ENCODE measurements at regions of chr1 and their contacts with region 1.

Region 1: DNA sequence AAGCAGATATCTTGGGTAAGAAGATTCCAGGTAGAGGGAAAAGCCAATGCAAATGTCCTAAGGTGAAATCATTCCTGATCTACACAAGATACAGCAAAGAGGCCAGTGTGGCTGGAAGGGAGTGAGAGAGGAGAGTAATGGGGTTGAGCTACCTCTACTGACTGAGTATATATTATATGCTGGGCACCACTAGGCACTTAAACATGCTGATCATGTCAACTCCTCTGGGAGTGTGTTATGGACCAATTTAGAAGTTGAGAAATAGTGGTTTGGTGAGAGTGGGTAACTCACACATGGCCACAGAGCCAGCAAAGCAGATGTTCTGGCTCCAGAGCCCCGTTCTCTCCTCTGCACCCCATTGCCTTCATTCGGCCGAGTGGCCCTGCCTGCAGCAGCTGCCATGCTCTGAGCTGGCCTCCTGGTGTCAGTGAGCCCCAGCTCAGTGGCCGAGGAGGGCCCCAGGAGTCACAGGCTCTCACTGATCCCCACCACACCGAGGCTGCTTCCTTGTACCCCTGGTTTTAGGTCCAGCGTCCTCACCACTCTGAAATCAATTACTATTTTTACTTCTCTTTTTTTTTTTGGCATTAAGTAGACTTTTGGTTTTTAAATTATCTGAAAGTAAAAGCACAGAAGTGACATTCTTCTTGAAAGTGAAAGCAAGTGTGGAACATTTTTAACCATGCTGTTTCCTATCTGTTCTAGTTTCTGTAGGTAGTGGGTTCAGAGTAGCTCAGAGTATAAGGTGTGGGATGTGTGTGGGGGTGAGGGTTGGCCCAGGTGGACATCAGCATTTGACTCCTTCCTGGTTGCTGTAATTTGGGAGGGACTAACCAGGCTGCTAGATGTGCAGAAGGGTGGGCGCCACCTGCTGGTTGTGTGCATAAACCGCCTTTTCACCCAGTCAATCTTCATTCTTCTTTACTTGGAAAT is 45.8 kb upstream of the CRNN start:
- DNase-seq: peak; percentile 89
- ATAC-seq: peak; percentile 93
- H3K4me3 Mint-ChIP-seq: peak overlapping the region; percentile 26
- H3K27ac Mint-ChIP-seq: peak overlapping the region; percentile 84
- H3K4me1 Mint-ChIP-seq: peaks cover 31% of the 10 kb centered on the region
- H3K27me3 Mint-ChIP-seq: peaks cover 1% of the 10 kb centered on the region
- CTCF ChIP-seq: peak; percentile 90

Region 2: DNA sequence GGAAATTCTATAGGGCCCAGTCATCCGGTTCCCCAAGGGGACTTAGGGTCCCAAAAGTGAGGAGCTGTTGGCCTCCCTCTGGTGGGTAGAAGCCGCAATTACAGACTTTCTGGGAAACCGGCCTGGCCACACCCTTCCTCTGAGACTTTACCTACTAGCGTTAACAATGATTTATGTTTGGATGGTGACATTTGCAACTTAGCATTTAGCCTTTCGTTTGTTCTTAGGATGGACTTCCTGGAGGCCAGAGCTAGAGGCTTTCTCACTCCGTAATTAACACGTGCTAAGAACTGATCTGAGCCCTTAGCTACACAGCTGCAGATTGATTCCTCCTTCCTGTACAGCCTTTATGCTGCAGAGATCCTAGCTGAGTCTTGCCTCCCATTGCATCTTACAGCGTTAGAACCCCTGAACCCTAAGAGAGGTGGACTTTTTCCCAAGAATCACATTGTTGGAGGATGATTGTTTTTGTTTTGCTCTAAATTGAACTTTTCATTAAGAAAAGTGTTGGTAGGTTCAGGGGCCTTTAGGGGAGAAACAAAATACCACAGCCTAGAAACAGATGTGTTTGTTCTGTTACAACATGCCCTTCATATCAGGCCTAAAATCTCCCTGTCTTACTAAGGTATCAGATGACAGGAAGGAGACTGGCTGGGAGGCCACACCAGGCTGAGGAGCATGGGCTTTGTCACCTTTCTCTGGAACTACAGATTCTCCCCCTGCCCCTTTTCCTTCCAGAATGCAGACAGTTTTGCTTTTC is 425.0 kb before region 1 on chr1:
- CTCF ChIA-PET with region 1: interaction called, 10 read pairs
- POLR2A ChIA-PET with region 1: no interaction called
- intact Hi-C with region 1: no loop called
- DNase-seq: peak; percentile 84
- ATAC-seq: peak; percentile 78
- H3K4me3 Mint-ChIP-seq: peak overlapping the region; percentile 92
- H3K27ac Mint-ChIP-seq: peak overlapping the region; percentile 93
- H3K4me1 Mint-ChIP-seq: peaks cover 34% of the 10 kb centered on the region
- H3K27me3 Mint-ChIP-seq: no peaks in the 10 kb centered on the region
- CTCF ChIP-seq: peak; percentile 83

Region 3: DNA sequence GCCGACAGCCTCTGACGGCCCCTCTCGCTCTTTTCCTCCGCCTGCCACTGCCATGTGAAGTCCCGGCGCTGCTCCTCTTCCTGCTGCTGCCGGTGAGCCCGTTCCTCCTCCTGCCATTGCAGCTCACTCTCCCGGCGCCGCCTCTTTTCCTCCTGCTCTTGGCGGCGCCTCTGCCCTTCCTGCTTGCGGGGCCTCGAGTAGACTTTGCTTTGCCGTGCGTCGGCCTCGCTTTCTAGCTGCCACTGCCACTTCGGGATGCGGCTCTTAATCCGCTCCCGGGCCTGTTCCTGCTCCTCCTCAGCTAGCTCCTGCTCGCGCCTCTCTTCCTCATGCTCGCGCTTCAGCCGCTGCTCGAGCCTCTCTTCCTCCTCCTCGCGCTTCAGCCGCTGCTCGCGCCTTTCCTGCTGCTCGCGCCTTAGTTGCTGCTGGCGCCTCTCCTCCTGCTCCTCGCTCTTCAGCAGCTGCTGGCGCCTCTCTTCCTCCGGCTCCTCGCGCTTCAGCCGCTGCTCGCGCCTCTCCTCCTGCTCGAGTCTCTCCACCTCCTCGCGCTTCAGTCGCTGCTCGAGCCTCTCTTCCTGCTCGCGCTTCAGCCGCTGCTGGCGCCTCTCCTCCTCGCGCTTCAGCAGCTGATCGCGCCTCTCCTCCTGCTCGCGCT is 348.9 kb before region 1 on chr1:
- CTCF ChIA-PET with region 1: interaction called, 20 read pairs
- POLR2A ChIA-PET with region 1: interaction called, 3 read pairs
- intact Hi-C with region 1: no loop called
- DNase-seq: peak; percentile 43
- ATAC-seq: peak; percentile 66
- H3K4me3 Mint-ChIP-seq: no peak overlapping the region
- H3K27ac Mint-ChIP-seq: no peak overlapping the region
- H3K4me1 Mint-ChIP-seq: peaks cover 4% of the 10 kb centered on the region
- H3K27me3 Mint-ChIP-seq: peaks cover 19% of the 10 kb centered on the region
- CTCF ChIP-seq: no peak

Region 4: GRCh38 chr1:152189657-152190442 is 270.0 kb before region 1 on chr1:
- CTCF ChIA-PET with region 1: interaction called, 153 read pairs
- POLR2A ChIA-PET with region 1: interaction called, 4 read pairs
- intact Hi-C with region 1: loop called (anchors 1 kb)
- DNase-seq: peak; percentile 85
- ATAC-seq: peak; percentile 76
- H3K4me3 Mint-ChIP-seq: peak overlapping the region; percentile 66
- H3K27ac Mint-ChIP-seq: peak overlapping the region; percentile 43
- H3K4me1 Mint-ChIP-seq: peaks cover 6% of the 10 kb centered on the region
- H3K27me3 Mint-ChIP-seq: no peaks in the 10 kb centered on the region
- CTCF ChIP-seq: peak; percentile 87

Region 5: DNA sequence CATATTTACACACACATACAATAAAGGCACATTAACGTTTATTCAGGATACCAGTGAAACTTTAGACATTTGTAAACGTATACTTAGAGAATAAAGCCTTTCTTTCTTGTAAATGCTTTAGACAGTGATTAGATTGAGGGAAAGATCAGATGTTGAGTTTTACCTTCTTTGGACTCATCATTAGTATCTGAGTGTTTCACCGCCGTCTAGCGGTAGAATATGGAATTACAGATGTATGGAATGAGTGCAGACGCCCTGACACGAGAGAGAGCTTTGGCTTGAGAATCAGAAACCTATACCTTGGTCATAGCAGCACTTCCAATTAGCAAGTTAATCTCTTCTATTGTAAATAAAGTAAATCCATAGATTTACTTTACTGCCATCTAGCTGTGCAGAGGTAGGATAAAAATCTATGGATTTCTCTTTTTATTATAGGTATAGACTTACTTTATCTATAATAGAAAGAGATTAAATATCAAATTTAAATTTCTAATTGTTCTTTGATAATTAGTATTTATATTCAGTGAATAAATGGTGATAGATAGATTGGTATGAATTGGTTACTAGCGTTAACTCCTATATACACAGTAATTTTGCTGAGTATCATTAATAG is 112.6 kb before region 1 on chr1:
- CTCF ChIA-PET with region 1: interaction called, 50 read pairs
- POLR2A ChIA-PET with region 1: no interaction called
- intact Hi-C with region 1: loop called (anchors 5 kb)
- DNase-seq: peak; percentile 63
- ATAC-seq: peak; percentile 79
- H3K4me3 Mint-ChIP-seq: no peak overlapping the region
- H3K27ac Mint-ChIP-seq: no peak overlapping the region
- H3K4me1 Mint-ChIP-seq: peaks cover 7% of the 10 kb centered on the region
- H3K27me3 Mint-ChIP-seq: peaks cover 22% of the 10 kb centered on the region
- CTCF ChIP-seq: peak; percentile 94

Region 6: DNA sequence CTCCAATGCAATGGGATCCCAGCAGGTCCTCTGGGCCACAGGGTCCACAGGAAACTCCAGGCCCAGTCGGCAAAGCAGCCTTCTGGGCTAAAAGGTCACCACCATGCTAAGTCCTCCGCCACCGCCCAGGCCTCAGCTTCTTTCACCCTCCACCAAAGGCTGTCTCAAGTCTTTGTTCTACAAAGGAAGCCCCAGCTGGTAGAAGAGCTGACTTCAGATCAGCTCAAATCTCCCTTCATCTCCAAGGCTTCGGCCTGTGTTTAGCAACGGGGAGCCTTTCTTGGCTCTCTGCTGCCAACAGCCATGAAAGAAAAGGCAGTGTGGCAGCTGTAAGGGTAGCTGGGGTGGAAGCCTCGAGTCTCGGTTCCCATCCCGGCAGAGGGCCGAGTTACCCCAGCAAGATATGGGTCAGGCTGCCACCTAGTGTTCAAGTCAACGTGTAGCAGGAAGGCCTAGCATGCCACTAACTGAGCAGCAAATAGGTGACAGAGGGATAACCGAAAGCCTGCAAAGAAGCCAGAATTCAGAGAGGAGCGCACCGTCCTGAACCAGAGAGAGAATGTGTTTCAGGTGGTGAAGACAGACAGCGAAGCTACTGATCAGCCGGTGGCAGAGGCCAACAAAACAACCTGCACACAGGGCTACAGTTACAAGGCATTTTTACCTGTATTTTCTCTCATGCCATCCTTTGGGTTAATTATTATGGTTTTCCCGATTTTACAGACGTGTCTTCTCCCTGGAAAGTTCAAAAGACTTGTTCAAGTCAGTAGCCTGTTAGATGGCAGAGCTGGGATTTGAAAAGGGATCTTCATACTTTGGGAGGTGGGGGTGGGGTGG is 19.0 kb before region 1 on chr1:
- CTCF ChIA-PET with region 1: interaction called, 67 read pairs
- POLR2A ChIA-PET with region 1: no interaction called
- intact Hi-C with region 1: no loop called
- DNase-seq: peak; percentile 76
- ATAC-seq: peak; percentile 99
- H3K4me3 Mint-ChIP-seq: no peak overlapping the region
- H3K27ac Mint-ChIP-seq: no peak overlapping the region
- H3K4me1 Mint-ChIP-seq: no peaks in the 10 kb centered on the region
- H3K27me3 Mint-ChIP-seq: peaks cover 24% of the 10 kb centered on the region
- CTCF ChIP-seq: peak; percentile 77

Region 7: DNA sequence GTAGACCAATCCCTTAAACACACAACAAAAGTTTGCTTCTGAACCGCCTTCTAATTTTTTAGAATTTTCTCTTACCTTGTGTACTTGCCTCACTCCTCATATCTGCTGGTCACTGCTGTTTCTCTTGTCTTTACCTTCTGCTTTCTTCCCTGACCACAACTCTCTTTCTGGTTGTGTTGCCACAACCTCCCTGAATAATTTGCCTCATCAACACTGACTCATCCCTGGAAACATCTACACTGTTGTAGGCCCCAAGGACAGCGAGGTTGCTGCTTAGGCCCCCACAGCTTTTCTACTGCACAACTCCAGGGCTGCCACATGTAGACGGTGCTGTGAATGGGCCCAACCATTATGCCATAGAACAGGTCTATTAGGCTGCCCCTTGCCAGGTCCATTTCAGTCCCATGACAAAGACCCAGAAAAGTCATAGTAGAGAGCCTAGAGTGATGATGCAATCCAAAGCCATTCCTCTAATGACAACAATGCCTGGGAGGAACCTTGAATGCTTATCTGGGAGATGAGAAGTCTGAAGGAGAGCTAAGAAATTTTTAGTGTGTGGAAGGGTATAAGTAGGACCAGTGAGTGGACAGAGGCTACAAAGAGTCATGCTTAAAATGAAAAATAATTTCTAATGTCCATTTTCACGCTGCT is 14.2 kb after region 1 on chr1:
- CTCF ChIA-PET with region 1: interaction called, 32 read pairs
- POLR2A ChIA-PET with region 1: no interaction called
- intact Hi-C with region 1: no loop called
- DNase-seq: no peak
- ATAC-seq: no peak
- H3K4me3 Mint-ChIP-seq: no peak overlapping the region
- H3K27ac Mint-ChIP-seq: no peak overlapping the region
- H3K4me1 Mint-ChIP-seq: no peaks in the 10 kb centered on the region
- H3K27me3 Mint-ChIP-seq: peaks cover 5% of the 10 kb centered on the region
- CTCF ChIP-seq: no peak

Region 8: GRCh38 chr1:152487871-152488270 is 28.0 kb after region 1 on chr1:
- CTCF ChIA-PET with region 1: no interaction called
- POLR2A ChIA-PET with region 1: no interaction called
- intact Hi-C with region 1: no loop called
- DNase-seq: no peak
- ATAC-seq: no peak
- H3K4me3 Mint-ChIP-seq: no peak overlapping the region
- H3K27ac Mint-ChIP-seq: no peak overlapping the region
- H3K4me1 Mint-ChIP-seq: peaks cover 4% of the 10 kb centered on the region
- H3K27me3 Mint-ChIP-seq: peaks cover 3% of the 10 kb centered on the region
- CTCF ChIP-seq: no peak